Natural killer cell (primary cell): ENCODE measurements at regions of chr10 and their contacts with region 1.

Region 1: GRCh38 chr10:93376372-93377293 is 105.5 kb downstream of the MYOF start:
- DNase-seq: peak in 1 of 2 donors; percentile 84
- ATAC-seq: peak; percentile 69 to 90 (median 88)
- H3K4me3 ChIP-seq: no peak overlapping the region
- H3K4me3 Mint-ChIP-seq: no peak overlapping the region
- H3K27ac ChIP-seq: no peak overlapping the region
- H3K27ac Mint-ChIP-seq: no peak overlapping the region
- H3K4me1 ChIP-seq: no peaks in the 10 kb centered on the region
- H3K4me1 Mint-ChIP-seq: peaks cover 0 to 10% of the 10 kb centered on the region in 2 donors
- H3K27me3 ChIP-seq: no peaks in the 10 kb centered on the region
- H3K27me3 Mint-ChIP-seq: peaks cover 13 to 22% of the 10 kb centered on the region in 2 donors
- CTCF ChIP-seq: peak; percentile 89

Region 2: DNA sequence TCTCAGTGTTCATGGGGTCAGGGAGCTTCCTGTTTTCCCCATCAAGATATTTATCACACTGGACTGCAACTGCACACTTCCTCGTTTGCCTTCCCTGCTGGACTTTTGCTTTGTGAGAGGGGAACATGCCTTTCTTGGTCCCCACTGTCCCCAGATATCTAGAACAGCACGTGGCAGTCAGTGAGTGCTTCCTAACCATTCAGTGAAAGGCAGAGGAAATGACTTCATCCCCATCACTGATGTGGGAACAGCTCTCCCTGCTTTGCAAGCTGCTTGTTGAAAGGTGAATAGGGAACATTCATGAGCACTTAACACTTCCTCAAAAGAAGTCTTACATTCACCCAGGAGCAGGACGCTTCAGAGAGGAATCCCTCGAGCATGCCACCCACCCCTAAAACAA is 29.9 kb before region 1 on chr10:
- intact Hi-C with region 1: no loop called
- DNase-seq: no peak
- ATAC-seq: no peak
- H3K4me3 ChIP-seq: no peak overlapping the region
- H3K4me3 Mint-ChIP-seq: no peak overlapping the region
- H3K27ac ChIP-seq: no peak overlapping the region
- H3K27ac Mint-ChIP-seq: no peak overlapping the region
- H3K4me1 ChIP-seq: no peaks in the 10 kb centered on the region
- H3K4me1 Mint-ChIP-seq: peaks cover 0 to 5% of the 10 kb centered on the region in 2 donors
- H3K27me3 ChIP-seq: no peaks in the 10 kb centered on the region
- H3K27me3 Mint-ChIP-seq: peaks cover 6 to 7% of the 10 kb centered on the region in 2 donors
- CTCF ChIP-seq: no peak

Region 3: DNA sequence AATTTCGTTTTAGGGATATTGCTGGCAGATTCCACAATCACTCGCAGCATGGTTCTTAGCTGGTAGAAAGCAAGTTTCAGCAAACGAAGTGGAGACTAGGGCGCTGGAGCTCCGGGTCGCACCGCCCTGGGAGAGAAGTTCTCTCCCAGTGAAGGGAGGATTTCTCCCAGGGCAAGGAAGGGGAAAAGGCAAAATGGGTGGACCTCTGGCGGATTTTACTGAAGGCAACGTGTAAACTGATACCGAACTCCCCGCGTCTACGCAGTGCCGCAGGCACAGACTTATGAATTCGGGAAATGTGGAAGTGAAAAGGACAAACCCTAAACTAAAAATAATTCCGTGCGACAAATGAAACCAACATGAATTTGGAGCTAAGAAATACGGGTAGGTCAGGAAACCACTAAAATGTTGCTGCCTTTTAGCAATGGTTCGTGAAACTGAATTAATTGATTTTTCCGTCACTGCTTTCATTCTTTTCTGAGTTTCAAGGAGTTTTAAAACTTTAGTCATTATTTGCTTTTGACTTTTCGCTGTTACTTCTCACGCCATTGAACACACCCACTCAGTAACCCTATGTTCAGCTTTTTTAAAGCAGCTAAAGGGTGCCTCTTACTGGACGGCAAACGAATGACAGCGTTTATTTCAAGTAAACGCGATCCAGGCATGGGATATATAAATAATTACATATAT is 105.7 kb after region 1 on chr10 and contains the start of gene MYOF:
- intact Hi-C with region 1: loop called (anchors 1 kb)
- DNase-seq: peak in 1 of 2 donors; percentile 81
- ATAC-seq: peak; percentile 85 to 95 (median 94)
- H3K4me3 ChIP-seq: peak within 1 kb of the TSS; percentile 38
- H3K4me3 Mint-ChIP-seq: peak within 1 kb of the TSS; percentile 88
- H3K27ac ChIP-seq: no peak within 1 kb of the TSS
- H3K27ac Mint-ChIP-seq: peak within 1 kb of the TSS in 1 of 2 donors; percentile 66
- H3K4me1 ChIP-seq: peaks cover 7% of the 10 kb centered on the region
- H3K4me1 Mint-ChIP-seq: peaks cover 11 to 12% of the 10 kb centered on the region in 2 donors
- H3K27me3 ChIP-seq: peaks cover 13% of the 10 kb centered on the region
- H3K27me3 Mint-ChIP-seq: peaks cover 36 to 53% of the 10 kb centered on the region in 2 donors
- CTCF ChIP-seq: peak; percentile 65
- total RNA-seq, gene MYOF: 2.0 to 9.7 (median 2.9) TPM

Region 4: DNA sequence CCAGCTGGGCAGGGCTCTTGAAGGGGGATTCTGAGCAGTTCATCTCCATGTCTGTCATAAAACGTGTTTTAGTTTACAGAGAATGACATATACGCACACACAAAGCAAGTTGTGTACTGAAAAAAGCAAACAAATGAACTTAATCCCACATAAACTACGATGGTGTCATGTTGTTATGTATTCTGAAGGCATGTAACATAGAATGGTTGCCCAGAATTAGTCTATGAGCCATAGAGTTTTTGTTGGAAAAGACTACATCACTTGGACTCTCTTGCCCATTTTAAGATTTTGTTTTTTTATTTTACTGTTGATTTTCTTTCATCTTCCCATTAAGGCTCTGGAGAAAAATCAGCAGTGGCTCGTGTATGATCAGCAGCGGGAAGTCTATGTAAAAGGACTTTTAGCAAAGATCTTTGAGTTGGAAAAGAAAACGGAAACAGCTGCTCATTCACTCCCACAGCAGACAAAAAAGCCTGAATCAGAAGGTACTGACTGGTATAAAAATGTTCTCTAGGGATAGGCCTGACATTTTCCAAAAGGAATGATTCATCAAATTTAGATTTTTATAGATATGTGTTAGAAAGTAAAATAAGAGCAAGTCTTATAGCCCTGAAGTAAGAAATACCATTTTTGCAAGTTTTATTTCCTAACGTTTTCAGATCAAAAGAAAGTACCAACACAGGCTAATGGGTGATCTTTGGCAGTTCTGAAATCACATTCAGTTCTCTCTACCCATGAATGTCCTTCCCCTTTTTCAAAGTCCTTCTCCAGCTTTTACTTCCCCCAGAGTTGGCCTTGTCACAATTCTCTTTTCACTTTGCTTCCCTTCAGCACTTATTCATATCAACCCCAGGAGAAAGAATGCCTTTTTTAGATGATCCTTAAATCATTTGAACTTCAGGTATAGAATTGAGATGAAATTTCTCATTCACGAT is 138.7 kb after region 1 on chr10:
- intact Hi-C with region 1: loop called (anchors 1 kb)
- DNase-seq: no peak
- ATAC-seq: no peak
- H3K4me3 ChIP-seq: no peak overlapping the region
- H3K4me3 Mint-ChIP-seq: no peak overlapping the region
- H3K27ac ChIP-seq: no peak overlapping the region
- H3K27ac Mint-ChIP-seq: no peak overlapping the region
- H3K4me1 ChIP-seq: no peaks in the 10 kb centered on the region
- H3K4me1 Mint-ChIP-seq: no peaks in the 10 kb centered on the region
- H3K27me3 ChIP-seq: no peaks in the 10 kb centered on the region
- H3K27me3 Mint-ChIP-seq: no peaks in the 10 kb centered on the region
- CTCF ChIP-seq: no peak